PC-3 (cell line): ENCODE measurements at regions of chr6 and their contacts with region 1.

Region 1: GRCh38 chr6:36442671-36443470 is at the starts of genes KCTD20 and PXT1:
- DNase-seq: peak; percentile 91
- ATAC-seq: peak; percentile 73
- H3K4me3 ChIP-seq: peak within 1 kb of the TSS; percentile 97
- H3K27ac ChIP-seq: peak within 1 kb of the TSS; percentile 83
- H3K4me1 ChIP-seq: peaks cover 29% of the 10 kb centered on the region
- H3K27me3 ChIP-seq: no peaks in the 10 kb centered on the region
- CTCF ChIP-seq: no peak
- total RNA-seq, gene KCTD20: 20.8 and 26.5 TPM in 2 replicates
- total RNA-seq, gene PXT1: not detected in 2 replicates

Region 2: DNA sequence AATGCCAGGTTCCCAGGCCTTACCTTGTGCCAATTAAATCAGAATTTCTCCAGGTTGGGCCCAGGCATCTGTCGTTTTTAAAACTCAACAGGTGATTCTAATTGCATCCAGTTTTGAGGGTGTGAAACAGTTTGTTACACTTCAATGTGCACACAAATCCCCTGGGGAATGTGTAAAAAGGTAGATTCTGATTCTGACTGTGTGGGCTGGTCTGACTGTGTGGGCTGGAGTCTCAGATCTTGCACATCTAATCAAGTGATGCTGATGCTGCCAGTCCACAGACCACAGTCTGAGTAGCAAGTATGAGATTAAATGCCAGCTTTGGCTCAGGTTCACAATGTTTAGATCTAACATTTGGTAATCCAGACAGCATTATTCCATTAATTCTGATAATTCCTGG is 42.9 kb before region 1 on chr6:
- CTCF ChIA-PET with region 1: no interaction called
- POLR2A ChIA-PET with region 1: no interaction called
- intact Hi-C with region 1: no loop called
- DNase-seq: no peak
- ATAC-seq: no peak
- H3K4me3 ChIP-seq: no peak overlapping the region
- H3K27ac ChIP-seq: no peak overlapping the region
- H3K4me1 ChIP-seq: no peaks in the 10 kb centered on the region
- H3K27me3 ChIP-seq: no peaks in the 10 kb centered on the region
- CTCF ChIP-seq: no peak

Region 3: DNA sequence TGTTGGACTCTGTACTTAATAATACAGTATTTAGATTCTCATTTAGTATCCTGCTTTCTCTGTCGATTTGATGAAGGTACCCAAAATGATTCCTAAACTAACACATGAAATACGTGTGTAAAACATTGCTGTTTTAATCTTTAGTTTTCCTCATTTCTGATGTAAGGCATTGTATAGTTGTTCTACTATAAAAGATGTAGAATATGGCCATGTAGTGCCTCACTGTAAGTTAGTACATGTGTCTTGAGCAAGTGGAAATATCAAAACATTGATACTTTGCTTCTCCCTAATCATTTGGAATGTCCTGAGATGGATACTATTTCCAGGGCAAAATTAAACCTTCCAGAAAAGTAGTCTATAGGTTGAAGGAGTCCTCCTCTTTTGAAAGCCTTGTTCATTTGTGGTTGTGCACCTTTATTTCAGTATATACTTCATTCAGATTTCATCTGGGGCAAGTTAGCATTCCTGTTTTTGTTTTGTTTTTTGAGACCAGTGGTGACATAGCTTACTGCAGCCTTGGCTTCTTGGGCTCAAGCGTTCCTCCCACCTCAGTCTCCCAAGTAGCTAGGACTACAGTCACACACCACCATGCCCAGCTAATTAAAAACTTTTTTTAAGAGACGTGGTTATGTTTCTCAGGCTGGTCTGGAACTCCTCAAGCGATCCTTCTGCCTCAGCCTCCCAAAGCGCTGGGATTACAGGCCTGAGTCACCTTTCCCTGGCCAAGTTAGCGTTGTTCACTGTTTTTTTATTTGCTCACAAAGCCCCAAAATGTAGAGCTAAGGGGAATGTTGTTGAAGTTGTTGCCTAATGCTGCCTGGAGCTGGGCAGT is 162.9 kb after region 1 on chr6:
- CTCF ChIA-PET with region 1: no interaction called
- POLR2A ChIA-PET with region 1: no interaction called
- intact Hi-C with region 1: loop called (anchors 5 kb)
- DNase-seq: no peak
- ATAC-seq: no peak
- H3K4me3 ChIP-seq: no peak overlapping the region
- H3K27ac ChIP-seq: no peak overlapping the region
- H3K4me1 ChIP-seq: no peaks in the 10 kb centered on the region
- H3K27me3 ChIP-seq: no peaks in the 10 kb centered on the region
- CTCF ChIP-seq: no peak

Region 4: GRCh38 chr6:36678518-36679027 is 235.7 kb after region 1 on chr6 and contains the start of gene CDKN1A:
- CTCF ChIA-PET with region 1: no interaction called
- POLR2A ChIA-PET with region 1: no interaction called
- intact Hi-C with region 1: no loop called
- DNase-seq: peak; percentile 92
- ATAC-seq: peak; percentile 74
- H3K4me3 ChIP-seq: peak within 1 kb of the TSS; percentile 76
- H3K27ac ChIP-seq: peak within 1 kb of the TSS; percentile 49
- H3K4me1 ChIP-seq: peaks cover 34% of the 10 kb centered on the region
- H3K27me3 ChIP-seq: no peaks in the 10 kb centered on the region
- CTCF ChIP-seq: no peak
- total RNA-seq, gene CDKN1A: 79.5 and 91.5 TPM in 2 replicates